Left ventricle myocardium superior (tissue), 1 donor: ENCODE measurements at regions of chr16 and their contacts with region 1.

Region 1: DNA sequence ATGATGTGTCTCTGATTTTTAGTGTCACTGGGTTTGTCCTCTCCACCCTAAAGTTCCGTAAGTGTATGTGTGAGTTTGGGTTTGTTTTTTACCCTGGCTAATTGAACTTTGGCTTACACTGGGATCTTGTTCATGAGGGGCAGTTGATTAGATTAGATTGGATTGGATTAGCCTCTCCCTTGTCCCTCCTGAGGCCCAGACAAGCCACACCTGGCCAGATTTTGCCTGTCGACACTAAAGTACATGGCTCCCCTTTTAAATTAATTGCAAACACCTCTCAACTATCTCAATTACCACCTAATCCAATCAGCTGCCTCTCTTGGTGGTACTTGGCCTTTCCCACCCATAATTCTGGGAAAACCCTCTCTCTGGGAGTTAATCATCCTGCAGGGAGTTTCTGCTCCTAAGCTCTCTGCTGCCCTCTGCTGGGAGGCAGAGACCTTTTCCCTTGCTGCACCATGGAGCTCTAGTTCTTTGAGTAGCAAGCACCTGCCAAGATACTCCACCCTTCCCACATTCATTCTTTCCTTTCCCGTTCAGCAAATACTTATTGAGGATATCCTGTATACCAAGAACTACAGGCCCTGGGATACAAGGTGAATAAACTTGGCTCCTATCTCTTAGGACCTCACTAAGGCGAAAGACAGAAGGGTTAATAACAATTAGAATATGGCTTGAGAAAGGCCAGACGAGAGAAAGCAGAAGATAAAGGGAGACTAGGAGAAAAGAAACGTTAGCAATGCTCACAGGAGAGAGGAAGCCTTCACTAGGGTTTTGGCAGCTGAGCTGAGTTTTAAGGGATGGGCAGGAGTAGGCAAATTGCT is 60.0 kb upstream of the MPHOSPH6 start:
- DNase-seq: peak; percentile 65
- ATAC-seq: peak; percentile 60

Region 2: GRCh38 chr16:81946206-81946605 is 283.8 kb before region 1 on chr16:
- intact Hi-C with region 1: loop called (anchors 5 kb)
- DNase-seq: no peak
- ATAC-seq: no peak

Region 3: GRCh38 chr16:82031116-82032084 is 198.6 kb before region 1 on chr16:
- intact Hi-C with region 1: loop called (anchors 10 kb)
- DNase-seq: no peak
- ATAC-seq: no peak